ENCODE measurements at regions of chr13 and their contacts with region 1.

Region 1: DNA sequence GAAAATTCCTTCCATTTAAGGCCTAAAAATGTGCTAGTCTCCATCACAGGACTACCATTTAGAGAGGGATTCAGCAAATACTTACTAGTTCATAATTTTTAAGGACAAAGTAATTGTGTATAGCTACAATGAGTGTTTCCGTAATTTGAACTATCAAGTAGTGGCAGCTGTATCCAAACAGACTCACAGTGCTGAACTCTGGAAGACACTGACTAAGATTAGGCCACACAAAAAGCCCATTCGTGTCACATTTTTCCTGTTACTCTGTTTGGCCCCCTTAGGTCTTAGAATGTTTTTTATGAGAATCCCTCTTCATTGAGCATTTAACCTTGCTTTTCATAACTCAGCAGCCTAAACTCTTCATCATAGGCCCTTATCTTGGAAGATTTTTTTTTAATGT is 731.2 kb upstream of the PCDH9 start:
- DNase-seq: no peak
- ATAC-seq: no peak
- H3K4me3 ChIP-seq: no peak overlapping the region
- H3K27ac ChIP-seq: no peak overlapping the region
- H3K4me1 ChIP-seq: no peaks in the 10 kb centered on the region
- H3K27me3 ChIP-seq: no peaks in the 10 kb centered on the region
- CTCF ChIP-seq: no peak
- POLR2A ChIP-seq: no peak

Region 2: DNA sequence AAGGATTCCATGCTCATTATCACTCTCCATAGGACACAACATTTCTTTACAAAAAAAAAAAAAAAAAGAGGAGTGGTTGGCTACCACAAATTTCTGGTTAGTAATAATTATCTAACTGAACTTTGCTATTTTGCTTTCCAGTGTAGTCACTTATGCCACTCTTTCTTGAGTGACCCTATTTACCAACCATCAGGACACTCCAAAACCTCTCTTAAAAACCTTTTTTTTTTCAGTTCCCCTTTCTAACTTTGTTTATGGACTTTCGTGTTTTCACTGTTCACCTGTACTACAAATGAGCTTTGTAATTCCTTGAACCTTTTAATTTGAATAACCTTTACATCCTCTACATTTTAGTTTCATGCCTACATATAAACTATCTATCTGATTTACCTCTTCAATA is 44.7 kb before region 1 on chr13:
- in situ Hi-C with region 1: loop called in 1 of 4 experiments (anchors 5 kb)
- intact Hi-C with region 1: no loop called
- DNase-seq: no peak
- ATAC-seq: no peak
- H3K4me3 ChIP-seq: no peak overlapping the region
- H3K27ac ChIP-seq: no peak overlapping the region
- H3K4me1 ChIP-seq: no peaks in the 10 kb centered on the region
- H3K27me3 ChIP-seq: no peaks in the 10 kb centered on the region
- CTCF ChIP-seq: no peak
- POLR2A ChIP-seq: no peak

Region 3: DNA sequence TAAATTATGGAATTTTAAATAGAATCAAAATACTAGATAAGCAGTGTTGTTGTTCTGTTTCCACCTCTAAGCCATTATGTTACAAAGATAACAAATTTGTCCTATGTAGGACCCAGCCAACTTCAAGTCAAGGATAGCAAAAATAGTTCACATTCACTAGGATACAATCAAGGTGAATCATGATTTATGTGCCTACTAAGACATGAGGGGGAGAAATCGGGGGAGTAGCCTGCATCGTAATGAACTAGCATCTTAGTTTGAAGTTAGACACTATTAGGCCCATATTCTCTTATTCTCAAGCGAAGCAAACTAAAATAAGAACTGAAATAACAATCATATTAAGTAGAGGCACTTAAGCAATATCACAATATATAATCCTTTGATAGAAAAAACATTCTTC is 48.2 kb after region 1 on chr13:
- in situ Hi-C with region 1: no loop called
- intact Hi-C with region 1: no loop called
- DNase-seq: no peak
- ATAC-seq: no peak
- H3K4me3 ChIP-seq: no peak overlapping the region
- H3K27ac ChIP-seq: no peak overlapping the region
- H3K4me1 ChIP-seq: no peaks in the 10 kb centered on the region
- H3K27me3 ChIP-seq: no peaks in the 10 kb centered on the region
- CTCF ChIP-seq: no peak
- POLR2A ChIP-seq: no peak

Region 4: GRCh38 chr13:68759617-68760016 is 798.3 kb after region 1 on chr13:
- in situ Hi-C with region 1: no loop called
- intact Hi-C with region 1: no loop called
- DNase-seq: no peak
- ATAC-seq: no peak
- H3K4me3 ChIP-seq: no peak overlapping the region
- H3K27ac ChIP-seq: no peak overlapping the region
- H3K4me1 ChIP-seq: no peaks in the 10 kb centered on the region
- H3K27me3 ChIP-seq: no peaks in the 10 kb centered on the region
- CTCF ChIP-seq: no peak
- POLR2A ChIP-seq: no peak

Measured in gastrocnemius medialis (tissue), 4 donors.